K562 (cell line): ENCODE measurements at regions of chr5 and their contacts with region 1.

Region 1: DNA sequence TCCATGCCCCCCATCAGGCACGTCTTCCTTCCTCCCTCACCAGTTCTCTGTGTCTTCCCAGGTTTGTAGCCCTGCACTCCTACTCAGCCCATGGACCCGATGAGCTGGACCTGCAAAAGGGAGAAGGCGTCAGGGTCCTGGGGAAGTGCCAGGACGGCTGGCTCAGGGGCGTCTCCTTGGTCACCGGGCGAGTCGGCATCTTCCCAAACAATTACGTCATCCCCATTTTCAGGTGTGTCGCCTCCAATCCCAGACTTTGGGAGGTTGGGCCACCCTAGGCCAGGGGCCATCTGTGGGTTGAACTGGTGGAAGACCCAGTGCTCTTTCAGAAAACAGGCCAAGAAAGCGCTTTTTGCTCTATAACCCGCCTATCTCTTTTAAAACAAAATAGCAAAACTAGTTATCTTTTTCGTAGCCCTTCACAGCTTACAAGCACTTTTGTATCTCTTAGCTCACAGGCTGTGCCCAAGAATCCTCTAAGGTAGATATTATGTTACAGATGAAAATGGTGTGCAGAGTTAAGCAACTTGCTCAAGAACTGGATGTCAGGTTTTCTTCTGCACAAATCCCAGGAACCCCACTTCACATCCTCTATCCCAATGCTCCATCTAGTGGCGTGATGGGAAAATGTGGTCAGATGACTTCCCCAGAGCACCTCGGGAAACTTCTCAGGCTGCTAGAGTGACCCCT is 56.2 kb downstream of the PLAC8L1 start:
- DNase-seq: peak; percentile 71 to 78 (median 74)
- ATAC-seq: peak; percentile 93
- H3K4me3 ChIP-seq: no peak overlapping the region
- H3K27ac ChIP-seq: no peak overlapping the region
- H3K4me1 ChIP-seq: no peaks in the 10 kb centered on the region; a peak in 1 of 5 replicates
- H3K27me3 ChIP-seq: no peaks in the 10 kb centered on the region
- CTCF ChIP-seq: peak; percentile 77 to 90 (median 81)
- EP300 ChIP-seq: no peak
- POLR2A ChIP-seq: no peak
- RAD21 ChIP-seq: peak; percentile 88 to 95

Region 2: DNA sequence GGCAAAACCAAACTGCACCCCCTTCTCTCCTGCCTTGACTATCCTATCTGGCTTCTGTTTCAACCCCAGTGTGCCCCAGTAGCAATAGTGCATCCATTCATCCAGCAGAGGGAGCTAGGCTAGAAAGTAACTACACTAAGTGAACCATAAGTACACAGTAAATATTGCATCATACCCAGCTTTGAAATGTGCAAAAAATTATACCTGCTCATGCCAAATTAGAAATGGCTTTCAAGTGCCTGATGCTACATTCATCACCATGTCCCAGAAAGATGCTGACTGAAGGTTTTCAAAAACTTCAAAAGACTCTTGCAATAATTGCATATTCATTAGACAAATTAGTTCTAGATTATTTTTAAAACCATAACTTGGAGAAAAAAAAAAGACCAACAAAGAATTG is 367.5 kb before region 1 on chr5:
- CTCF ChIA-PET with region 1: interaction called, 3 read pairs
- POLR2A ChIA-PET with region 1: no interaction called
- in situ Hi-C with region 1: loop called (anchors 10 kb)
- intact Hi-C with region 1: loop called (anchors 5 kb)
- DNase-seq: peak; percentile 73 to 80 (median 76)
- ATAC-seq: peak; percentile 98
- H3K4me3 ChIP-seq: no peak overlapping the region
- H3K27ac ChIP-seq: no peak overlapping the region
- H3K4me1 ChIP-seq: peaks cover 0 to 10% of the 10 kb centered on the region in 2 experiments; a peak in 2 of 5 replicates
- H3K27me3 ChIP-seq: no peaks in the 10 kb centered on the region
- CTCF ChIP-seq: peak; percentile 78 to 87 (median 84)
- EP300 ChIP-seq: peak; percentile 57; the same call in 1 of the 2 replicates
- POLR2A ChIP-seq: no peak
- RAD21 ChIP-seq: peak; percentile 82 to 87

Region 3: GRCh38 chr5:145825751-145826180 is 223.4 kb before region 1 on chr5:
- CTCF ChIA-PET with region 1: no interaction called
- POLR2A ChIA-PET with region 1: no interaction called
- in situ Hi-C with region 1: no loop called
- intact Hi-C with region 1: loop called (anchors 1 kb)
- DNase-seq: peak; percentile 37 to 69 (median 41)
- ATAC-seq: peak; percentile 75
- H3K4me3 ChIP-seq: no peak overlapping the region
- H3K27ac ChIP-seq: no peak overlapping the region
- H3K4me1 ChIP-seq: peaks cover 3 to 21% of the 10 kb centered on the region in 2 experiments; a peak in 3 of 5 replicates
- H3K27me3 ChIP-seq: no peaks in the 10 kb centered on the region
- CTCF ChIP-seq: peak; percentile 77 to 99 (median 97)
- EP300 ChIP-seq: no peak
- POLR2A ChIP-seq: no peak
- RAD21 ChIP-seq: peak; percentile 79 to 80

Region 4: DNA sequence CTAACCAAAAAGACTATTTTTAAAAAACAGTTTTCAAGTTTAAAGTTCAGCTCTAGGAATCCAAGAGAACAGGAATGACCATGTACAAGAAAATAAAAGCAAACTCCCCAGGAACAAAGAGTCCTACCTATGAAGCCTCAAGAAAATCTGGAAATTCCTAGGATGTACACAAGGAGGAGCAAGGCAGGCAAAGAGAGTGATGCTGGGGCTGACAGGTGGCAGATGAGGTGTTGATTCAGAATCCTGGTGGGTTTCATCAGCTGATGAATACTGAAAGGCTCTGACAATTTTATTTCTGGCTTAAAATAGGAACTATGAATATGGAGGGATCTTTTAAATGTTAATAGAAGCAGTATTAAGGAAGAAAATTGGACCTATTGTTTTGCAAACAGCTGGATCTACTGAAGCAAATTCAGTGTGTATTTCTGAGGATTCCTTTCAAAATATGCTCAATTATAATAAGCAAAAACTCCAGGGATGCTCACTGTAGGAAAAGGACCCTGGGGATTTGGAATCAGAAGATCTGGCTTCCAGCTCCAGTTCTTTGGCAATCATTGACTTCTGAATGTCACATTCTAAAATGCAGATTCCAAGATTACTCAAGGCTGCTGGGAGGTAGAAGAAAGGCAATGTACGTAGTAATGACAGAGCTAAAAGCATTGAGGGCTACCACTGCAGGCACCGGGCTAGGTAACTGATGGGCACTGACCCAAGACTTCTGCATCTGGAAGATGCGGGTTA is 140.8 kb before region 1 on chr5:
- CTCF ChIA-PET with region 1: no interaction called
- POLR2A ChIA-PET with region 1: no interaction called
- in situ Hi-C with region 1: no loop called
- intact Hi-C with region 1: loop called (anchors 5 kb)
- DNase-seq: no peak
- ATAC-seq: no peak
- H3K4me3 ChIP-seq: no peak overlapping the region
- H3K27ac ChIP-seq: no peak overlapping the region
- H3K4me1 ChIP-seq: no peaks in the 10 kb centered on the region
- H3K27me3 ChIP-seq: peaks cover 11 to 19% of the 10 kb centered on the region in 2 experiments; a peak in 3 of 5 replicates
- CTCF ChIP-seq: peak in 2 of 3 experiments; percentile 10 to 11; a peak in 1 of 6 replicates
- EP300 ChIP-seq: no peak
- POLR2A ChIP-seq: no peak
- RAD21 ChIP-seq: peak in 1 of 2 experiments; percentile 46; a peak in 2 of 4 replicates

Region 5: DNA sequence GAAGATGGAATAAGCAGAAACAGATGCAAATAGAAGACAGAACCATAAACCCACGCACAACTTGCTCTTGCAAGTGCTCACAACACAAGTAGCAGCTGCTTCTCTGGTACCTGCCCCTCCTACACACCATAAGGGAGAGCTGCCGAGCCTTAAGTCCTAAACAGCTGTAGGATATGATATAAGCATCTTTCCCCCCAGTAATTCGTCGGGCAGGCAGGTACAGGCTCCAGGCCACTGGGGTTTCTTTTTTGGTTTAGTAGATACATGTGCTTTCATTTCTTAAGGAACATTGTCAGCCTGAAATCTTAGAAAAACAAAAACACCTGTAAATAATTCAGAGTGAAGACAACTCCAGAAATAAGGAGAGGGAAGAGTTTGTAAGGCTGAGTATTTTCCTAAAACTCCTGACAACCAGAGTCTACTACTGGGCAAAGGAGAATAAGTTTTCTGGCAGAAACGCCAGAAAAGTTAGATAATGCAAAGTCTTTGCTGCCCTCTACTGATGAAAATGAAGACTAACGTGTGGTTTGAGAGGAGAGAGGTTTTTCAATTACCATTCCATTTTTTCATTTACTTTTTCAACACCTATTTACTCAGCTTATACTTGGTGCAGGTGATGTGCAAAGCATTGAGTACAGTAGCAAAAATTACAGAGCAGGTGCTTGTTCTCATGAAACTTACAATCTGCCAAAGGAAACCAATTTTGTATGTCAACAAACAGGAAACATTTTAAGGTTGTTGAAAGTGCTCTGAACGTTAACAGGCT is 377.9 kb after region 1 on chr5:
- CTCF ChIA-PET with region 1: no interaction called
- POLR2A ChIA-PET with region 1: no interaction called
- in situ Hi-C with region 1: no loop called
- intact Hi-C with region 1: loop called (anchors 5 kb)
- DNase-seq: peak; percentile 32 to 55 (median 40)
- ATAC-seq: peak; percentile 85
- H3K4me3 ChIP-seq: no peak overlapping the region
- H3K27ac ChIP-seq: no peak overlapping the region
- H3K4me1 ChIP-seq: no peaks in the 10 kb centered on the region; a peak in 1 of 5 replicates
- H3K27me3 ChIP-seq: peaks cover 7 to 23% of the 10 kb centered on the region in 2 experiments; a peak in 4 of 5 replicates
- CTCF ChIP-seq: peak; percentile 46 to 79 (median 70); a peak in 5 of 6 replicates
- EP300 ChIP-seq: no peak
- POLR2A ChIP-seq: no peak
- RAD21 ChIP-seq: peak; percentile 80 to 89